ENCODE measurements at regions of chr17 and their contacts with region 1.

Region 1: DNA sequence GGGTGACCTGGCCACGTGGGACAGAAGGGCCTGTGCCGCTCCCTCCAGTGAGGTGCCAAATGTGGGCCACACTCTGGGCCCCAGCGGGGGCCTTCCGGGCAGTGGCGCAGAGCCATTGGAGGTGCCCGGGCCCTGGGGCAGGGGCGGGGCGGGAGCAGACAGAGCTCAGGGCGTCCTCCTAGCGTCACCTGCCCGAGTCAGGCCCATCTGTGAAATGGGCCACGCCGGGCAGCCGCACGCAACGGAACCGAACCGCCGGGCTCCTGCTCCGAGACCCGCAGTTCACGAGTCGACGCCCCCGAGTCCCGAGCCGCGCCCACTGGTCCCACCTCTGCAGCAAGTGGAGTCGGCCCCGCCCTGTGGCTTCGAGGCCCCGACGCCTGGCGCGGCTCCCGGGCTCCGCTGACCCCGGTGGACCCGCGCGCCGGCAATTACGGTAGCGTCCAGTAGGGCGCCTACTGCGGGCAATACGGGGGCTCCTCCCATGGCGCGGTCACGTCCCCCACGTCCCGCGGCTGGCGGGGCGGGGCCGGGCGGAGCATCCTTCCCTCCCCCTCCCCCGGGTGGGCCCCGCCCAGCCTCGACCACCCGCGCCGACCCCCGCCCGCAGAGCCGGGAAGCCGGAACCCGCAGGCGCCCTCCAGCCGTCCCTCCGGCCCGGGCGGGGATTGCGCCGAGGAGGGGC is 1.9 kb downstream of the SLC16A3 start:
- DNase-seq: peak; percentile 85
- ATAC-seq: peak; percentile 45
- H3K4me3 Mint-ChIP-seq: peak overlapping the region; percentile 79
- H3K27ac Mint-ChIP-seq: peak overlapping the region; percentile 75
- H3K4me1 Mint-ChIP-seq: peaks cover 9% of the 10 kb centered on the region
- H3K27me3 Mint-ChIP-seq: no peaks in the 10 kb centered on the region

Region 2: DNA sequence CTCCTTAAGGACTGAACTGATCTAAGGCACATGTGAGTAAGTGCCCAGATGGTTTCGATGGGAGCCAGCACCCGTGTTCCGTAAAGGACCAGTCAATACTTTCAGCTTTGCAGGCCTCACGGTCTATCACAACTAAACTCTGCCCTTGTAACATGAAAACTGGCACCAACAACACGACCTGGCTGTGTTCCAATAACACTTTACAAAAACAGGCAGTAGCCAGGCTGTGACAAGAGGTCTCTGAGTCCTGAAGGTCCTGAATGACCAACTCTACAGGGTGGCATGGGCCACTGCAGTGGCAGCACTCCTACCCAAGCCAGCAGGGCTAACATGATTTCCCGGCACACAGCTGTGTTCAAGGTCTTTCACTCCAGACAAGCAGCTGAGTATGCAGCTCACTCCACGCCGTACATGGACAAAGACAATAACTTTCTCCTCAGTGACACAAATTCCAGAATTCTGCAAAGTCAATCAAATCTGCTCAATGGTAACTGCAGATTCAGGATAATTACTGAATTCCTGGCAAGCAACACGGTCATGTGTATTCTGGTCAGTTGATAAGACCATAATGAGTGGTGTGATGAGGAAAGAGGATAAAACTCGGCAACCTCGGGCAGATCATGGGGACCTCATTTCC is 609.2 kb before region 1 on chr17:
- CTCF ChIA-PET with region 1: no interaction called
- POLR2A ChIA-PET with region 1: no interaction called
- intact Hi-C with region 1: no loop called
- DNase-seq: no peak
- ATAC-seq: no peak
- H3K4me3 Mint-ChIP-seq: no peak overlapping the region
- H3K27ac Mint-ChIP-seq: no peak overlapping the region
- H3K4me1 Mint-ChIP-seq: peaks cover 8% of the 10 kb centered on the region
- H3K27me3 Mint-ChIP-seq: no peaks in the 10 kb centered on the region

Region 3: GRCh38 chr17:82205719-82206508 is 24.9 kb before region 1 on chr17:
- CTCF ChIA-PET with region 1: interaction called, 19 read pairs
- POLR2A ChIA-PET with region 1: interaction called, 6 read pairs
- intact Hi-C with region 1: loop called in 1 of 2 experiments (anchors 1 kb)
- DNase-seq: peak; percentile 89
- ATAC-seq: peak; percentile 76
- H3K4me3 Mint-ChIP-seq: peak overlapping the region; percentile 60
- H3K27ac Mint-ChIP-seq: peak overlapping the region; percentile 93
- H3K4me1 Mint-ChIP-seq: peaks cover 52% of the 10 kb centered on the region
- H3K27me3 Mint-ChIP-seq: no peaks in the 10 kb centered on the region

Region 4: GRCh38 chr17:82212331-82213250 is 18.2 kb before region 1 on chr17 and contains the start of gene CCDC57:
- CTCF ChIA-PET with region 1: no interaction called
- POLR2A ChIA-PET with region 1: no interaction called
- intact Hi-C with region 1: loop called in 1 of 2 experiments (anchors 1 kb)
- DNase-seq: peak; percentile 88
- ATAC-seq: peak; percentile 67
- H3K4me3 Mint-ChIP-seq: peak within 1 kb of the TSS; percentile 76
- H3K27ac Mint-ChIP-seq: peak within 1 kb of the TSS; percentile 66
- H3K4me1 Mint-ChIP-seq: peaks cover 39% of the 10 kb centered on the region
- H3K27me3 Mint-ChIP-seq: no peaks in the 10 kb centered on the region
- total RNA-seq, gene CCDC57: 41.6 to 43.8 TPM

Region 5: DNA sequence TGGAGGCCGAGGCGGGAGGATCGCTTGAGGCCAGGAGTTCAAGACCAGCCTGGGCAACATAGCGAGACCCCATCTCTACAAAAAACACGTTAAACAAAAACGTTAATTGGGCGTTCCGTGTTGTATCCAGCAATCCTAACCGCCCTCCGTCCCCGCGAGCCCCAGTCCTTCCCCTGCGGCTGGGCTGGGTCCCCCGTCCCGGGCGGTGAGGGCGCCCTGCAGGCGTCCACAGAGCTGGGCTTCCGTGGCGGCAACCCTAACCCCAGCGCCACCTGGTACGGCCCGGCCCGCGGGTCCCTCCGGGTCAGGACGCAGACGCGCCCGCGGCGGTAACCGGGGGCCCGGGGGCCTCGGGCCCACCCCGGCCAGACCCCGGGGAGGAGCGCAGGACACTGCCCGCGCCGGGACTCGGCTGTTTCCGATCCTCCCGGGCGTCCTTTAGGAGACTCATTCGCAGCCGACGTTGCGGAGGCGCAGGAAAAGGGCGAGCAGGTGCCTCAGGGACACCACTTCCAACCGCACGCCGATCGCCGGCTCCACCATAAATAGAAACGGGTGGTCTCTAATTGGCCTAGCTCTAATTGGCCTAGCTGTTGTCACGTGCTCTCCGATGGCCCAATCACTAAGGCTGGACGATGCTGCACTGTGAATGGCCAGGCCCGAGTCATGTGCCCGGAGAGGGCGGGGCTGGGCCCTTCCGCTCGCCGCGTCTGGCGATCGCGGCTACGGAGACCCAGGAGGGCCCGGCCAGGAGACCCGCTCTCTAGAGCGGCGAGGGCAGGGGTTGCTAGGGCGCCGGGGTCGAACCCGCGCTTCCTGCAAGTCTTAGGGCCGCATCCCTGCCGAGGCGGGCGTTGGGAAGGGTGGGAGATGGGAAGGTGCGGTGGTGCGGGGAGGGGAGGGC is 61.7 kb after region 1 on chr17:
- CTCF ChIA-PET with region 1: interaction called, 3 read pairs
- POLR2A ChIA-PET with region 1: interaction called, 10 read pairs
- intact Hi-C with region 1: loop called in 1 of 2 experiments (anchors 2 kb)
- DNase-seq: peak; percentile 96
- ATAC-seq: peak; percentile 89
- H3K4me3 Mint-ChIP-seq: peak overlapping the region; percentile 78
- H3K27ac Mint-ChIP-seq: peak overlapping the region; percentile 85
- H3K4me1 Mint-ChIP-seq: peaks cover 71% of the 10 kb centered on the region
- H3K27me3 Mint-ChIP-seq: no peaks in the 10 kb centered on the region